HEK293 (cell line): ENCODE measurements at regions of chr15 and their contacts with region 1.

Region 1: DNA sequence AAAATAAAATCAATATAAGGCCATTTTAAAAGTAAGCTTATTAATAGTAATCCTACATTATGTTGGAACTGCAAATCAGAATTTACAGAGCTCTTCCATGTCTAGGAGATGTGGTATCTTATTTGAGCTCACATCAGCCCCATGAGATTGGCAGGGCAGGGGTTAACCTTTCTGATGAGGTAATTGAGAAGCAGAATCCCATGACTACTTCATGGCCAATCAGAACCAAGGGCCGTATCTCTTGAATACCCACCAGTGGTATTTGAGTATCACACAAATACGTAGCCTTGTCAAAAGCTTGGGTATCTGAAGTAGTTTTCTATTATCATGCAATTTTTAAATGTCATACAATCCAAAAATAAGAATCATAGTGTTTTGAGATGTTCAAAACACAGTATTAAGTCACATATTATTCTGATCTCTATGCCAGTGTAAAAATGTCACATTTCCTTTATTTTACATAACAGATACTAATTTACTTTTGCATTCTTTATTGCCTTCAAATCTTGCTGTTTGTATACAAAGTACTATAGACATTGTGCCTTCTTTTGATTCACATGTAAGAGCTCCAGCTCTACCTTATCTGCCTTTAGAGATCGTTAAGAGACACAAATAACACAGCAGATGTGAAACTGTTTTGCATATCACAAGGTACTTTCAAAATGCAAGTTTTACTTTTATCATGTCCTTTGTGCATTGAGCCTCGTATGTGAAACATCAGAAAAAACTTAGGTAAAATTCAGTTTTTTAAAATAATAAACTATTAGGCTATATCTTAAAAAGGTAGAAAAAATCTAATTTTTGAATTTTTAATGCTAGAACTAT is 251.7 kb upstream of the GOLGA6L4 start:
- H3K4me3 ChIP-seq: no peak overlapping the region
- H3K27ac ChIP-seq: no peak overlapping the region
- H3K4me1 ChIP-seq: no peaks in the 10 kb centered on the region
- CTCF ChIP-seq: no peak

Region 2: DNA sequence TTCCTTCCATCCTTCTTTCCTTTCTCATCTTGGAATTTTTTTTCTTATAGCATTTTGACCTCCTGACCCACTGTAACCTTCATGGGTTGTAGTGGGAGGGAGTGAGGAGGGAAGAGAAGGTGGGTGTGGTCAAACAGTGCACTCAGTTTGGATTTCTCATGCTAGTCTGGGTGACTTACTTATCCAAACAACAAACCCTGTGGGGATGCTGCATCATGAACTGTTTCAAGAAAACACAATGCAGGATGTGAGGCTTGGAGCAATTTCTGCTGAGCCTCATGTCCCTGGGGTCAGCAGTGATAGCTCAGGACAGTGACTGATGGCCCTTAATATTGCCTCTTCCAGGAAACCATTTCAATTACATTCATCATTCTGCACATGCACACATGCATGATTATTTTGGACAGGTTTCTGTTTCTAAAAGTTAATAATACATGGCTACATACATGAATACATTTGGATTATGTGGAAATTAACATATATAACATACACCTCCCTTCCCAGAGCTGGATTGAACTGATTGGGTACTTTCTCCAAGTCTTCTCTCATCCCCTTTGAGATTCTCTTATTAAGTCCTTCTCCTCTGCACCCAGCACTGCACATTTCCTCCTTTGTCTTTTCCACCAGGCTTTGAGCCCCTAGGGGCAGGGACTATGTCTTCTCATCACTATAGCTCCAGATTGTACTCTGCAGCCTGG is 268.8 kb before region 1 on chr15:
- CTCF ChIA-PET with region 1: no interaction called
- POLR2A ChIA-PET with region 1: no interaction called
- H3K4me3 ChIP-seq: no peak overlapping the region
- H3K27ac ChIP-seq: no peak overlapping the region
- H3K4me1 ChIP-seq: no peaks in the 10 kb centered on the region
- CTCF ChIP-seq: no peak

Region 3: DNA sequence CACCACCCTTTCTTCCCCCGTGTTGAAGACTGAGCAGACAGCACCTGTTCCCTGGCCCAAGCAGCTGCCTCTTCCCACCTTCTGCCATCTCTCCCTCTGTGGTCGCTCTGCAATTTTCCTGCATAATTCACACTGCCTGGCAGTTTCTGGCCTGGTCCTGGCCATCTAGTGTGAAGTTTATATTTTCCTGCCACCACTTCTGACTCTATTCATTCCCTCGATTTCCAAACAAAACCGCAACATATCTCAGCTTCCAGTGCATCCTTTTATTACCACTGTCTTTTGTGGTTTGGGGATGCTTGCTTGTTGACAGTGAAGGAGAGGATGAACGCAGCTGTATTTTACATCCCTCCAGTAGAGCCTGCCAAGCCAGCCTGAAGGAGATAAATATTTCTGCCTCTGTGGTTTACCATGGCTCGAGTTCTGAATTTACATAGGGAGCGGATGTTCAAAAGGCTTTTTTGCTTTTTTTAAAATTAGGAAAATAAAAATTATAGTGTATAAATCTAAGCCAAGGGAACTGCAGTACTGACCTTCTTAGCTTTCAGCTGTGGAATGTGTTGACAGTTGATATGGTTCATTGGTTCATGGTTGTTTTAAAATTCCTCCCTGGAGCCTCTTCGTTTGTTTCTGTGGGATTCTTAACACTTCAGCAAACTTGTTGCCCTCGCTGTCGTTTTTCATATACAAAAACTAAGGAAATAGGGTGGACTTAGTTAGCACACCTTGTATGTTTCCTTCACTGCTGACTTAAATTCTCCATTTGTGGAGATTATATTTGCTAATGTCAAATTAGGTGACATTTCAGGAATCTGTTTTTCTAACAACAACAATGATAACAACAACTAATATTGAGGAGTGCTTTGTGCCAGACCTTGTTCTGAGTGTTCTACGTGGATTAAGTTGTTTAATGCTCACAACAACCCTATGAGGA is 79.5 kb before region 1 on chr15:
- CTCF ChIA-PET with region 1: no interaction called
- POLR2A ChIA-PET with region 1: no interaction called
- H3K4me3 ChIP-seq: no peak overlapping the region
- H3K27ac ChIP-seq: no peak overlapping the region
- H3K4me1 ChIP-seq: no peaks in the 10 kb centered on the region
- CTCF ChIP-seq: no peak

Region 4: DNA sequence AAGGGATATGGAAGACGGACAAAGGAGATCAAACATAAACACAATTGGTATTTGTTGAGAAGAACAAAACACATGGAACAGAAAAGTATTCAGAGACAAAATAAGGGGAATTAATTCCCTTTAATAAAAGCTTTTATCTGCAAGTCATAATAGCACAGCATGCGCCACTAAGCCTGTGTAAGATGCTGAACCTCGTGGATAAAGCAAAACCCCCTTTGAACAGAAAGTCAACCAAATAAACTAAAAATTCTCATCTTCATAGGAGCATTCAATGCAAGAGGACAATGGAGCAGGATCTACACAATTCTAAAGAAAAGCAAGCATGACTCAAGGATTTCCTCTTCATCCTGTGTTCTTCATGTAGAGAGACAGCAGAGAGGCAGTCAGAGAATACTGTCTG is 22.5 kb before region 1 on chr15:
- CTCF ChIA-PET with region 1: no interaction called
- POLR2A ChIA-PET with region 1: no interaction called
- H3K4me3 ChIP-seq: no peak overlapping the region
- H3K27ac ChIP-seq: no peak overlapping the region
- H3K4me1 ChIP-seq: no peaks in the 10 kb centered on the region
- CTCF ChIP-seq: no peak

Region 5: GRCh38 chr15:83973816-83974215 is 10.0 kb before region 1 on chr15:
- CTCF ChIA-PET with region 1: interaction called, 12 read pairs
- POLR2A ChIA-PET with region 1: interaction called, 4 read pairs
- H3K4me3 ChIP-seq: no peak overlapping the region
- H3K27ac ChIP-seq: no peak overlapping the region
- H3K4me1 ChIP-seq: no peaks in the 10 kb centered on the region
- CTCF ChIP-seq: no peak